ENCODE measurements at regions of chr2 and their contacts with region 1.

Region 1: GRCh38 chr2:191218292-191218898 is 26.8 kb upstream of the MYO1B start:
- DNase-seq: no peak
- H3K4me3 Mint-ChIP-seq: no peak overlapping the region
- H3K27ac Mint-ChIP-seq: no peak overlapping the region
- H3K4me1 Mint-ChIP-seq: peaks cover 29% of the 10 kb centered on the region
- H3K27me3 Mint-ChIP-seq: no peaks in the 10 kb centered on the region

Region 2: DNA sequence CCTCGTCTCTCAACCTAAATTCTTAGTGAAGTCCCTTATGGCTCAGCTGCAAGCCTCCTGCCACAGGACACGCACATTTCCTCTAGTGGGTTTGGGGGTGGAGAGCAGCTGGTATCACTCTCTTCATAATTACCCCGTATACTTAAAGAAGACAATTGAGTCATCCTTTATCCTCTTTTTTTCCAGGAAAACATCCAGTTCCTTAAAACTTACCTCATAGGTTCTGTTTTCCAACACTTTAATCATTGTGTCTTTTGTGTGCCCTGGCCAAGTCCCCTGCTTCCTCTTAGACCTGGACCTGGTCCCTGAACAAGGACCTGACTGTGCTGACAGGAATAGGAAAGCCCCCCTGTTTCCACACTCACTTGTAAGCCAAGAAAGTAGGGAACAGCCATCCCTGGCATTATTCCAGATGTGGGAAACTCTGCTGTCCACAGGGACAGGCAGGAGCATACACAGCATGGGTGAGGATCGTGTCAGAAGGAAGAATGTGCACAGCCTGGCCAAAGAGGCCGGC is 15.5 kb before region 1 on chr2:
- intact Hi-C with region 1: loop called (anchors 2 kb)
- DNase-seq: no peak
- H3K4me3 Mint-ChIP-seq: peak overlapping the region; percentile 68
- H3K27ac Mint-ChIP-seq: peak overlapping the region; percentile 86
- H3K4me1 Mint-ChIP-seq: peaks cover 52% of the 10 kb centered on the region
- H3K27me3 Mint-ChIP-seq: no peaks in the 10 kb centered on the region

Region 3: DNA sequence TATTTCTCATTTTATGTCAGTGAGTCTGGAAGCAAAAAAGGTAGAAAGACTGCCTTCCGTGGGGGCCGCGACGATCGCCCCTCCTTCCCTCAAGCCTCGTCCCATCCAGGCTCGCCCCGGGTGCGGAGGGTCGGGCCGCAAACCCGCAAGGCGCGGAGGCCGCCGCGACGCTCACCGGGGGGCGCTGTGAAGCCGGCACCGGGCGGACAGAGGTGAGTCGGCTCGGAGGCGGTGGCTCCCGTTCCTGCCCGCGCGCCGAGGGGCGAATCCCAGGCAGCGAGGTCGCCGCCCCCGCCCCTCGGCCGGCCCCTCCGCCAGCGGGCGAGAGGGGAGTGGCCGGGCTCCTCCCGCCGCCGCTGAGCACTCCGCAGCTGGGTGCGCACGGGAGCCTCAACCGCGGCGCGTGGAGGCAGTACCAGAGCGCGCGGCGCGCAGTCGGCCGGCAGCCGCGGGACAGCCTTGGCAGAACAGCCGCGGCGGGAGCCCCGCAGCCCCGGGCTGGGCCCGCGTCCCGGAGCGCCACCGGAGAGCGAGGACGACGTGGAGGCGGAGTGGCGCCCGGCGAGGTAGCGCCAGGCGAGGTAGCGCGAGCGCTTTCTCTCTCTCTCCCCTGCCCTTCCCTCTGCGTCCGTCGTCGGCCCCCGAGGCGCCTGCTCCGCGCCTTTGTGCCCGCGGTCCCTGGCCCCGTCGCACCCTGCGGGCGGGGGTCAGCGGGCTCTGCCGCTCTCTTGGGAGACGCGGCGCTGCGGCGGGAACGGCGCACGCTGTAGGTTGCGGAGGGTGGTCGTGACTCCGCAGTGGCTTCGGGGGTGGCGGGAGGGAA is 26.9 kb after region 1 on chr2 and contains the start of gene MYO1B:
- intact Hi-C with region 1: no loop called
- DNase-seq: peak; percentile 58
- H3K4me3 Mint-ChIP-seq: peak within 1 kb of the TSS; percentile 77
- H3K27ac Mint-ChIP-seq: peak within 1 kb of the TSS; percentile 49
- H3K4me1 Mint-ChIP-seq: peaks cover 23% of the 10 kb centered on the region
- H3K27me3 Mint-ChIP-seq: peaks cover 5% of the 10 kb centered on the region
- total RNA-seq, gene MYO1B: 13.2 and 15.2 TPM in 2 replicates

Region 4: DNA sequence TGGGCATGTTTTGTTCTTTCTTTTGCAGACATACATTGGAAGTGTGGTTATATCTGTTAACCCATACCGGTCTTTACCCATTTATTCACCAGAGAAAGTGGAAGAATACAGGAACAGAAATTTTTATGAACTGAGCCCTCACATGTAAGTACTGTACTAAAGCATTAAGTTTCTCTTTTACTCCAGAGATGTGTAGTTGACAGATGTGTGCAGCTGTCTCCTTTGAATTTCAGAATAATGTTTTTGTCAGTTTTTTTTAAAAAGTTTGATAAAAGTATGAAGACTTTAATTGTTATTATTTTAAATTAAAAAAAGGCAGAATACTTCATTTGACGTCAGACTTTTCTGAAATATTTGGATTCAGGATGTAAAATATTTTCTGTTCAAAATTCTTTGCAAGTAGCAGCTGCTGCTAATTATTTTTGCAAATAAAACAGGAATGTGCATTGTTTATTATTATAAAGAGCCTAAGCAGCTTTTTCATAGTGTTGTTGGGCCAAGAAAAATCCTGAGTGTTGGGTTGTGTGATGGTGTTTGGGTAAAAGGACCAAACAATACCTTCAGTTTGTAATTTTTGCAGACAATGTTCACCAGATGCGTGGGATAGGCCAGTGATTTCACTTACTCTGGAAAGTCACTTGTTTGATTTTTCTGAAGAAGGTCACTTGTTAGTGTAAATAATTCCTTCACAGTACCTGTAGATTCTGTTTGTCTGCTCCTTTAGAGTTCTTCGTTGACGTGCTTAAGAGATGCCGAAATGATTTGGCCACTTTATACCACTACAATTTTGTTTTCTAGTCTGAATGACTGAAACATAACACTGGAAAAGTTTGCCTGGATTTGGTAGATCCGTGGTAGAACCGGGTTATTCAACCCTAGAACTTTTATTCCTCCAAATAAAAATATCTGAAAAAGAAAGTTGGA is 78.0 kb after region 1 on chr2:
- intact Hi-C with region 1: no loop called
- DNase-seq: no peak
- H3K4me3 Mint-ChIP-seq: no peak overlapping the region
- H3K27ac Mint-ChIP-seq: no peak overlapping the region
- H3K4me1 Mint-ChIP-seq: peaks cover 23% of the 10 kb centered on the region
- H3K27me3 Mint-ChIP-seq: no peaks in the 10 kb centered on the region

Region 5: DNA sequence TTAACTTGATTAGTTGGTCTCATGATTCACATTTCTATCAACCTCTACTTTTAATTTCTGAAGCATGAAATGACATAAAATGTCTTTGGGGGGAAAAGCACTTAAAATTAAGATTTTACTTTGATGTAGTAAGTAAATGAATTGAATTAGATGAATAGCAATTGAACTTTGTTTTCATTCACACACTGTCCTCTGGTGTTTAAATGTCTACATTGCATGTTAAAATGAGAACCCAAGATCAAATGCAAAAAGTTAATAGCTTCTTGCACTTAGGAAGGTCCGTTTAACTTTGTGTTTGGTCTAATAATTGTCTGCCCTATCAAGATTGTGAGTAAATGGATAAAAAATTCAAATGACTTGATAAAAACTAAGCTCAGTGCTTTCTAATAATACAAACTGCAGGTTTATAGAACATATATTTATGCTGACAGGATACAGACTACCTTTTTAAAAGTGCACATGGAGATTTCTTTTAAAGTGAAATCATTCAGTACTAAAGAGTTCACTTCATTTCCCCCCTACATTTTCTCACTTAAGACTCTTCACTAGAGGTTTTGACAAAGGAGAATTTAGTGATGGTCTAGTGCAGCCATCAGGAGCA is 303.3 kb after region 1 on chr2:
- intact Hi-C with region 1: loop called (anchors 5 kb)
- DNase-seq: no peak
- H3K4me3 Mint-ChIP-seq: no peak overlapping the region
- H3K27ac Mint-ChIP-seq: no peak overlapping the region
- H3K4me1 Mint-ChIP-seq: no peaks in the 10 kb centered on the region
- H3K27me3 Mint-ChIP-seq: peaks cover 5% of the 10 kb centered on the region

Measured in activated T-helper 1 cell treated with anti-CD3 and anti-CD28 coated beads, Interleukin-12 subunit alpha, Interleukin-12 subunit beta, Interleukin-2, Interleukin-4 antibody, amounts not matched to agents 30 ng/mL and 10 ng/mL and 1 ng/mL, durations not matched to agents 14 hours and 24 hours and 36 hours (primary cell).